SK-N-SH (cell line): ENCODE measurements at regions of chr17 and their contacts with region 1.

Region 1: DNA sequence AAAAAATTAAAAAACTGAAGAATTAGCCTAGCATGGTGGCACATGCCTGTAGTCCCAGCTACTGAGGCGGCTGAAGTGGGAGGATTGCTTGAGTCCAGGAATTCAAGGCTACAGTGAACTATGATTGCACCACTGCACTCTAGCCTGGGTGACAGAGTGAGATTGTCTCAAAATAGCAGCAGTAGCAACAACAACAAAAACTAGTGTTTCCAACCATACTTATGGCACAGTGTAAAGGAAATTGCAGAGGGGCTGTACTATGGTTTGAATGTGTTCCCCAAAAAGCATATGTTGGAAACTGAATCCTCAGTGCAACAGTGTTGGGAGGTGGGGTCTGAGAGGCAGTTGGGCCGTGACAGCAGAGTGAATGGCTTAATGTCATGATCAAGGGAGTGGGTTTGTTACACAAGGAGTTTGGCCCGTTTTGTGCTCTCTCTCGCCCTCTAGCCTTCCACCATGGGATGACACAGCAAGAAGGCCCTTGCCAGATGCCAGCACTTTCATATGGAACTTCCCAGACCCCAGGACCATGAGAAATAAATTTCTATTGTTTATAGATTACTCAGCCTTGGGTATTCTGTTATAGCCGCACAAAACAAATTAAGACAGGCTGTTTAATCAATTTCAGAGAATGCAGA is 70.0 kb downstream of the PGS1 start:
- DNase-seq: no peak
- H3K4me3 ChIP-seq: no peak overlapping the region
- H3K27ac ChIP-seq: no peak overlapping the region
- H3K4me1 ChIP-seq: peaks cover 0 to 2% of the 10 kb centered on the region in 2 experiments; a peak in 1 of 4 replicates
- H3K27me3 ChIP-seq: no peaks in the 10 kb centered on the region
- CTCF ChIP-seq: peak; percentile 30; the same call in 1 of the 2 replicates
- EP300 ChIP-seq: no peak
- RAD21 ChIP-seq: no peak

Region 2: GRCh38 chr17:78313735-78314648 is 134.5 kb before region 1 on chr17:
- CTCF ChIA-PET with region 1: no interaction called
- POLR2A ChIA-PET with region 1: no interaction called
- DNase-seq: peak; percentile 95
- H3K4me3 ChIP-seq: peak overlapping the region; percentile 48 to 50
- H3K27ac ChIP-seq: peak overlapping the region; percentile 18 to 99; a peak in 3 of 4 replicates
- H3K4me1 ChIP-seq: peaks cover 21 to 32% of the 10 kb centered on the region in 2 experiments; a peak in 3 of 4 replicates
- H3K27me3 ChIP-seq: no peaks in the 10 kb centered on the region
- CTCF ChIP-seq: 0 out of 2 replicates have a peak, but pooled peaks have one; percentile 8
- EP300 ChIP-seq: no peak
- RAD21 ChIP-seq: no peak

Region 3: GRCh38 chr17:78438271-78438691 is 10.2 kb before region 1 on chr17:
- CTCF ChIA-PET with region 1: interaction called, 10 read pairs
- POLR2A ChIA-PET with region 1: no interaction called
- DNase-seq: no peak
- H3K4me3 ChIP-seq: no peak overlapping the region
- H3K27ac ChIP-seq: no peak overlapping the region
- H3K4me1 ChIP-seq: peaks cover 0 to 9% of the 10 kb centered on the region in 2 experiments; a peak in 1 of 4 replicates
- H3K27me3 ChIP-seq: no peaks in the 10 kb centered on the region
- CTCF ChIP-seq: no peak
- EP300 ChIP-seq: no peak
- RAD21 ChIP-seq: no peak